ENCODE measurements at regions of chr21 and their contacts with region 1.

Region 1: GRCh38 chr21:38798481-38798882 is 7.2 kb upstream of the ETS2 start:
- DNase-seq: no peak
- H3K4me3 ChIP-seq: no peak overlapping the region
- H3K27ac ChIP-seq: no peak overlapping the region
- H3K4me1 ChIP-seq: no peaks in the 10 kb centered on the region
- H3K27me3 ChIP-seq: no peaks in the 10 kb centered on the region
- CTCF ChIP-seq: no peak

Region 2: GRCh38 chr21:38669176-38669575 is 129.3 kb before region 1 on chr21:
- intact Hi-C with region 1: loop called (anchors 10 kb)
- DNase-seq: no peak
- H3K4me3 ChIP-seq: no peak overlapping the region
- H3K27ac ChIP-seq: no peak overlapping the region
- H3K4me1 ChIP-seq: peaks cover 0 to 23% (median 15%) of the 10 kb centered on the region in 4 donors
- H3K27me3 ChIP-seq: no peaks in the 10 kb centered on the region
- CTCF ChIP-seq: peak; percentile 31 to 41

Measured in tibial artery (tissue), 4 donors.